ENCODE measurements at regions of chr2 and their contacts with region 1.

Region 1: GRCh38 chr2:170715062-170715931 is at the start of gene SP5:
- DNase-seq: peak in 5 of 9 experiments; percentile 19 to 62 (median 32)
- ATAC-seq: peak; percentile 46
- H3K4me3 ChIP-seq: peak within 1 kb of the TSS; percentile 44
- H3K4me3 Mint-ChIP-seq: peak within 1 kb of the TSS; percentile 90
- H3K27ac ChIP-seq: no peak within 1 kb of the TSS
- H3K27ac Mint-ChIP-seq: peak within 1 kb of the TSS; percentile 37
- H3K4me1 ChIP-seq: peaks cover 50% of the 10 kb centered on the region
- H3K4me1 Mint-ChIP-seq: peaks cover 43% of the 10 kb centered on the region
- H3K27me3 ChIP-seq: peaks cover 46 to 47% of the 10 kb centered on the region in 2 experiments
- H3K27me3 Mint-ChIP-seq: peaks cover 59% of the 10 kb centered on the region
- CTCF ChIP-seq: no peak
- total RNA-seq, gene SP5: not detected

Region 2: DNA sequence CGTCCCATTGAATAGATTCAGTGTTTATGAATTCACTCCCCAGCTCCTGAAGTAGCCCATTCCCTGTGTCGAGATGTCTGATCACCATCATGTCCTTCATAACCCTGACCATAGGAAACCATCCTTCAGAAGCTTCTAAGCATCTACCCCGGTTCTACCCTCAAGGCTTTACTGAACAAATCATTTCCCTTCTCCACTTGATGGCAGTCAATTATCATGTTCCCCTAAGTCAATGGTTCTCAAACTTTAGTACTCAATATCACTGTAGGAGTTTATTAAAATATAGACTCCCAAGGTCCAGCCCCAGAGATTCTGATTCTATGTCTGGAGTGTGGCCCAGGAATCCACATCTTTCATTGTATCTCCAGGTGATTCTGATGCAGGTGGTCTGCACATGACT is 228.6 kb before region 1 on chr2:
- CTCF ChIA-PET with region 1: no interaction called
- POLR2A ChIA-PET with region 1: no interaction called
- intact Hi-C with region 1: no loop called
- DNase-seq: peak in 2 of 9 experiments; percentile 28 to 48
- ATAC-seq: no peak
- H3K4me3 ChIP-seq: no peak overlapping the region
- H3K4me3 Mint-ChIP-seq: no peak overlapping the region
- H3K27ac ChIP-seq: no peak overlapping the region
- H3K27ac Mint-ChIP-seq: no peak overlapping the region
- H3K4me1 ChIP-seq: no peaks in the 10 kb centered on the region
- H3K4me1 Mint-ChIP-seq: no peaks in the 10 kb centered on the region
- H3K27me3 ChIP-seq: no peaks in the 10 kb centered on the region
- H3K27me3 Mint-ChIP-seq: peaks cover 2% of the 10 kb centered on the region
- CTCF ChIP-seq: no peak

Region 3: GRCh38 chr2:170505631-170506275 is 209.5 kb before region 1 on chr2:
- CTCF ChIA-PET with region 1: no interaction called
- POLR2A ChIA-PET with region 1: no interaction called
- intact Hi-C with region 1: loop called in 1 of 2 experiments (anchors 10 kb)
- DNase-seq: peak in 1 of 9 experiments; percentile 4
- ATAC-seq: no peak
- H3K4me3 ChIP-seq: no peak overlapping the region
- H3K4me3 Mint-ChIP-seq: no peak overlapping the region
- H3K27ac ChIP-seq: no peak overlapping the region
- H3K27ac Mint-ChIP-seq: no peak overlapping the region
- H3K4me1 ChIP-seq: peaks cover 32% of the 10 kb centered on the region
- H3K4me1 Mint-ChIP-seq: peaks cover 39% of the 10 kb centered on the region
- H3K27me3 ChIP-seq: no peaks in the 10 kb centered on the region
- H3K27me3 Mint-ChIP-seq: peaks cover 19% of the 10 kb centered on the region
- CTCF ChIP-seq: no peak

Region 4: GRCh38 chr2:170665743-170666142 is 49.6 kb before region 1 on chr2:
- CTCF ChIA-PET with region 1: no interaction called
- POLR2A ChIA-PET with region 1: no interaction called
- intact Hi-C with region 1: no loop called
- DNase-seq: no peak
- ATAC-seq: no peak
- H3K4me3 ChIP-seq: no peak overlapping the region
- H3K4me3 Mint-ChIP-seq: no peak overlapping the region
- H3K27ac ChIP-seq: no peak overlapping the region
- H3K27ac Mint-ChIP-seq: no peak overlapping the region
- H3K4me1 ChIP-seq: no peaks in the 10 kb centered on the region
- H3K4me1 Mint-ChIP-seq: no peaks in the 10 kb centered on the region
- H3K27me3 ChIP-seq: no peaks in the 10 kb centered on the region
- H3K27me3 Mint-ChIP-seq: peaks cover 11% of the 10 kb centered on the region
- CTCF ChIP-seq: no peak

Region 5: GRCh38 chr2:170747921-170748320 is 32.6 kb after region 1 on chr2:
- CTCF ChIA-PET with region 1: no interaction called
- POLR2A ChIA-PET with region 1: no interaction called
- intact Hi-C with region 1: no loop called
- DNase-seq: no peak
- ATAC-seq: no peak
- H3K4me3 ChIP-seq: no peak overlapping the region
- H3K4me3 Mint-ChIP-seq: no peak overlapping the region
- H3K27ac ChIP-seq: no peak overlapping the region
- H3K27ac Mint-ChIP-seq: no peak overlapping the region
- H3K4me1 ChIP-seq: no peaks in the 10 kb centered on the region
- H3K4me1 Mint-ChIP-seq: no peaks in the 10 kb centered on the region
- H3K27me3 ChIP-seq: peaks cover 0 to 2% of the 10 kb centered on the region in 2 experiments
- H3K27me3 Mint-ChIP-seq: peaks cover 41% of the 10 kb centered on the region
- CTCF ChIP-seq: no peak

Region 6: DNA sequence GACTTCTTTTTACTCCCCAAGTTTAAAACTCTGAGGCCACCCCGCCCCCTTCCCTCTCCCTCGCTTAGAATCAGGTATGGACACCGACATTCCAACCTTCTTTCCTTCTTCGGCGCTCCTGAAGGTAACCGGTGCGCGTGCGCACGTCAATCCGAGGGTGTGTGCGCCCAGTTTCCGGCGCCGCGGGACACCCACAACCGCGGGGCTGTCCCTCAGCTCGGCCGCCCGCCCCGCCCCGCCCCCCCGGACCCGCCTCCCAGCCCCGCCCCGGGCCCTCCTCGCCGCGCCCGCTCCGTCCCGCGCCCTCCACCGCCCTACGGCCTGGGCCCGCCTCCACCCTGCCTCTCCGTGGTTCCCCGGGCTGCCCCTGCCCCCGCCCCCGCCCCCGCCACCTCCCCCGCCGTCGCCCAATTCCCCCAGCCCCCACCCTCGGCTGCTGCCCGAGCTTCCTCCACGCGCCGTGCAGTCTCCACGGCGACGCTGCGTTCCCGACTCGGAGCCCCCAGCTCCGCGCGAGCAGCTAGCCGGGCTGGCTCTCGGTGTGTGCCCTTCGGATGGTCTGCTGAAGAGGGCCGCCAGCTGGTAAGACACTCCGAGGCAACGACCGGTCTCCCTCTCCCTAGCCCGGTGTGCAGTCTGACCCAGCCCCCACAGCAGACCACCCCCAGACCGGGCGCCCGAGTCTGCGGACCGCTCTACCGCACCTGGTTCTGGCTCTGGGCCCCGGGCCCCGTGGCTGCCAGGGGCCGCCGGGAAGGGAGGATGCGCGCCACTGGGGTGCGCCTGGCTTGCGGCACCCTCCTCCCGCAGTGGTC is 55.5 kb after region 1 on chr2:
- CTCF ChIA-PET with region 1: no interaction called
- POLR2A ChIA-PET with region 1: interaction called, 4 read pairs
- intact Hi-C with region 1: loop called (anchors 5 kb)
- DNase-seq: peak; percentile 29 to 86 (median 51)
- ATAC-seq: peak; percentile 84
- H3K4me3 ChIP-seq: peak overlapping the region; percentile 63 to 74
- H3K4me3 Mint-ChIP-seq: peak overlapping the region; percentile 82
- H3K27ac ChIP-seq: peak overlapping the region in 1 of 2 experiments; percentile 23
- H3K27ac Mint-ChIP-seq: no peak overlapping the region
- H3K4me1 ChIP-seq: peaks cover 12% of the 10 kb centered on the region
- H3K4me1 Mint-ChIP-seq: peaks cover 12% of the 10 kb centered on the region
- H3K27me3 ChIP-seq: no peaks in the 10 kb centered on the region
- H3K27me3 Mint-ChIP-seq: peaks cover 10% of the 10 kb centered on the region
- CTCF ChIP-seq: no peak

Measured in CD8-positive, alpha-beta T cell (primary cell).